ENCODE measurements at regions of chr11 and their contacts with region 1.

Region 1: GRCh38 chr11:111730871-111731591 is 35.2 kb downstream of the PPP2R1B start:
- DNase-seq: peak; percentile 57 to 63
- H3K4me3 ChIP-seq: no peak overlapping the region
- H3K27ac ChIP-seq: peak overlapping the region; percentile 34 to 99 (median 97)
- H3K4me1 ChIP-seq: peaks cover 45 to 70% of the 10 kb centered on the region in 2 donors
- H3K27me3 ChIP-seq: no peaks in the 10 kb centered on the region
- CTCF ChIP-seq: no peak
- POLR2A ChIP-seq: peak in 1 of 2 donors; percentile 4

Region 2: DNA sequence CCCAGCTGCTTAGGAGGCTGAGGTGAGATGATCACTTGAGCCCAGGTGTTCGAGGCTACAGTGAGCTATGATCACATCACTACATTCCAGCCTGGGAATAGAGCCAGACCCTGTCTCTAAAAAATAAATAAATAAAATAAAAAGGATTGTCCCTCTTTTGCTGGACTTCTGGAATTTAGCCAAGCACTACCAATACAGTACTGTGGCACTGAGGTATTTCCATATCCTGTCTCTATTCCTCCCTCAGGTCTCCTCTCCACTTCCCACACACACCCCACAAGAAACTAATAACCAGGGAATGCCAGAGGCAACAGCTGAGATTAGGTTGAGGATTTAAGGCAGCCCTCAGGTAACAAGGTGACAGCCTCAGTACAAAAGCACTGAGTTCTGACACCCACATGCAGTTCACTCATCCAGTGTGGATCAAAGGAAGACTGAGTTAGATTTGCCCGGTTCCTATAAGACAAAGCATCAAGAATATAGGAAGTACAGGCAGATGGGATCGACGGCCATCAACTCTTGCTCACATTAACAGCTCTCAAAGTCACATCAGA is 39.6 kb after region 1 on chr11:
- intact Hi-C with region 1: loop called (anchors 5 kb)
- DNase-seq: no peak
- H3K4me3 ChIP-seq: no peak overlapping the region
- H3K27ac ChIP-seq: no peak overlapping the region
- H3K4me1 ChIP-seq: peaks cover 12 to 23% of the 10 kb centered on the region in 2 donors
- H3K27me3 ChIP-seq: no peaks in the 10 kb centered on the region
- CTCF ChIP-seq: no peak
- POLR2A ChIP-seq: no peak

Region 3: DNA sequence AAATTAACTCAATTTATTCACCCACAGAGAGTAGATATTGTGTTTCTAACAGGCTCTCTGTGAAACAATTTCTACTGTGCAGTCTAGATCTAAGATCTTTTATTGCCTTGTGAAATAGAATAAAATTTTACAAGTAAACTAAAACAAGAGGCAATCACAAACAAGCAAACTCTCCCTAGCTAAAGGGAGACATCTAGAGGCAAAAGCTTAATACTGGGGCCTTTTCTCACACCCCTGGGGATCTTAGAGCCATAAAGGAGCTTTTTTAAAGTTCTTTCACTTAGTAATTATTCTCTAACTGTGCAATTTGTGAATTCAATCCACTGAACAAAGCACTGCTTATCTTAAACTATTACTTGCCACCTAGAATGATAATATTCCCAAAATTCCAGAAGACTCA is 120.6 kb after region 1 on chr11:
- intact Hi-C with region 1: no loop called
- DNase-seq: no peak
- H3K4me3 ChIP-seq: no peak overlapping the region
- H3K27ac ChIP-seq: no peak overlapping the region
- H3K4me1 ChIP-seq: no peaks in the 10 kb centered on the region
- H3K27me3 ChIP-seq: no peaks in the 10 kb centered on the region
- CTCF ChIP-seq: no peak
- POLR2A ChIP-seq: no peak

Measured in thyroid gland (tissue), 4 donors.